ENCODE measurements at regions of chr3 and their contacts with region 1.

Region 1: DNA sequence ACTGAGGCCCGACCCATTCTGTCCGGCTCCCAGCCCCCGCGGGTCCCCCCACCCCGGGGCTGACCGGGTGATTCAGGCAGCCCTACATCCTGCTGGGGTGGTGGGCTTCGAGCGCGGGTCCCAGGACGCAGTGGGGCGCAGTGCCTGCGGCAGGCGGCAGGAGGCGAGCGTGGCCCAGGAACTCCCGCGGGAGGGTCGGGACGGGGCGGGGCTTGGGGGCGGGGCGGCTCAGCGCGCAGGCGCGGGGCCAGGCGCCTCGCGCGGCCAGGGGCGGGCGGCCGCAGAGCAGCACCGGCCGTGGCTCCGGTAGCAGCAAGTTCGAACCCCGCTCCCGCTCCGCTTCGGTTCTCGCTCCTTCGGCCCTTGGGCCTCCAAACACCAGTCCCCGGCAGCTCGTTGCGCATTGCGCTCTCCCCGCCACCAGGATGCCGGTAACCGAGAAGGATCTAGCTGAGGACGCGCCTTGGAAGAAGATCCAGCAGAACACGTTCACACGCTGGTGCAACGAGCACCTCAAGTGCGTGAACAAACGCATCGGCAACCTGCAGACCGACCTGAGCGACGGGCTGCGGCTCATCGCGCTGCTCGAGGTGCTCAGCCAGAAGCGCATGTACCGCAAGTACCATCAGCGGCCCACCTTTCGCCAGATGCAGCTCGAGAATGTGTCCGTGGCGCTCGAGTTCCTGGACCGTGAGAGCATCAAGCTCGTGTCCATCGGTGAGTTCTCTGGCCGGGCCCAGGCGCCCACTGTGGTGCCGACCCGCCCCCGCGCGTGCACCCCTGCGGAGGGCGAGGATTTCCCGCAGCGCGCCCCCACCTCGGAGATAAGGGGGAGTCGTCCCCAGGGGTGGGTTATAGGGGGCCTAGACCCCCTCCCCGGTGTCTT is at the start of gene FLNB:
- DNase-seq: peak; percentile 45
- ATAC-seq: peak; percentile 77
- H3K4me3 ChIP-seq: peak within 1 kb of the TSS; percentile 93 to 100 (median 99)
- H3K27ac ChIP-seq: peak within 1 kb of the TSS; percentile 74
- H3K4me1 ChIP-seq: peaks cover 55% of the 10 kb centered on the region
- H3K27me3 ChIP-seq: no peaks in the 10 kb centered on the region; a peak in 1 of 5 replicates
- CTCF ChIP-seq: peak; percentile 86
- EP300 ChIP-seq: no peak
- POLR2A ChIP-seq: peak; percentile 92 to 98
- RAD21 ChIP-seq: peak; percentile 83
- total RNA-seq, gene FLNB: 48.8 and 130 TPM in 2 replicates

Region 2: DNA sequence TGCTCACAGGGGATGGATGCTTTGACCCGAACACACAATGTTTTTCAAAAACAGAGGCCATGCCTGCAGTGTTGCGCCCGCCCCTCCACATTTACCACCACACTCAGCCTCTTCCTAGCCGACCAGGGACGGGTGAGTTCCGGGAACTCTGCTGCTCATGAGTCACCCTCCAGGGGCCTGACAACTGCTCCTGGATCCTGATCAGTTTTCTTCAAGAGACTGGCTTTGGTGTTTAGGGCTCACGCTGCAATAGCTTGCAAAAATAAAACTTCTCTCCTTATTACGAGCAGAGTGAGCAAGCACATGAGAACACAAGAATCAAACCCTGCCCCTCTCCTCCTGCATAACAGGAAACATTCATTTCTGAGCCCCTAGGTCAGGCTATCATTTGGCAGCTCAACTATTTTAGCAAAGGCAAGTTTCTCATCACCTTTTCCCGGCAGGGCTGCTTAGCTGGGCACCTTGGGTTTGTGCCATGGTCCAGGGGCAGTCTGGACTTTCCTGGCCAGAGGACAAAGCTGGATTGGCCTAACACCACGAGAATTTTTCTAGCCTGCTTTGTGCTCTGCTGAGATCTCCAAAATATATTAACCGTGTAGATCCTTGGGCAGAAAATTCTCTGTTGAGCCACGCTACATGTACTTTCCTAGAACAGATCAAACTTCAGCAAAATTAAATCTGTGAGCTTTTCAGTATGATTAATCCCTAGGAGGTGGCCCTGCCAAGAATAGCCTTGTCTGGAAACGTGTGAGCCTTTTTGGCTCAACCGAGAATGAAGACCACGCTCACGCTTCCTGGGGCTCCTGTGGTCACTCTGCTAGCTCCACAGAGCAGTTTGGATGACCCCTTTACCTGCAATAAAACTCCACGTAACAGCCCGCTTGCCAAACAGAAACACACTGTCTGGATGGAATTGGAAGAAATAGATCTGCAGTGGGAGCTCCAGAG is 1000.6 kb before region 1 on chr3:
- CTCF ChIA-PET with region 1: no interaction called
- POLR2A ChIA-PET with region 1: no interaction called
- in situ Hi-C with region 1: no loop called
- intact Hi-C with region 1: no loop called
- DNase-seq: no peak
- ATAC-seq: no peak
- H3K4me3 ChIP-seq: no peak overlapping the region
- H3K27ac ChIP-seq: no peak overlapping the region
- H3K4me1 ChIP-seq: no peaks in the 10 kb centered on the region
- H3K27me3 ChIP-seq: no peaks in the 10 kb centered on the region
- CTCF ChIP-seq: no peak
- EP300 ChIP-seq: no peak
- POLR2A ChIP-seq: no peak
- RAD21 ChIP-seq: no peak

Region 3: GRCh38 chr3:57961828-57962447 is 46.4 kb before region 1 on chr3:
- CTCF ChIA-PET with region 1: no interaction called
- POLR2A ChIA-PET with region 1: no interaction called
- in situ Hi-C with region 1: loop called (anchors 5 kb)
- intact Hi-C with region 1: loop called (anchors 5 kb)
- DNase-seq: peak; percentile 80
- ATAC-seq: peak; percentile 47
- H3K4me3 ChIP-seq: peak overlapping the region in 1 of 3 experiments; percentile 60; a peak in 2 of 6 replicates
- H3K27ac ChIP-seq: peak overlapping the region; percentile 74
- H3K4me1 ChIP-seq: peaks cover 59% of the 10 kb centered on the region
- H3K27me3 ChIP-seq: no peaks in the 10 kb centered on the region
- CTCF ChIP-seq: peak; percentile 70
- EP300 ChIP-seq: no peak
- POLR2A ChIP-seq: no peak
- RAD21 ChIP-seq: peak; percentile 78

Region 4: DNA sequence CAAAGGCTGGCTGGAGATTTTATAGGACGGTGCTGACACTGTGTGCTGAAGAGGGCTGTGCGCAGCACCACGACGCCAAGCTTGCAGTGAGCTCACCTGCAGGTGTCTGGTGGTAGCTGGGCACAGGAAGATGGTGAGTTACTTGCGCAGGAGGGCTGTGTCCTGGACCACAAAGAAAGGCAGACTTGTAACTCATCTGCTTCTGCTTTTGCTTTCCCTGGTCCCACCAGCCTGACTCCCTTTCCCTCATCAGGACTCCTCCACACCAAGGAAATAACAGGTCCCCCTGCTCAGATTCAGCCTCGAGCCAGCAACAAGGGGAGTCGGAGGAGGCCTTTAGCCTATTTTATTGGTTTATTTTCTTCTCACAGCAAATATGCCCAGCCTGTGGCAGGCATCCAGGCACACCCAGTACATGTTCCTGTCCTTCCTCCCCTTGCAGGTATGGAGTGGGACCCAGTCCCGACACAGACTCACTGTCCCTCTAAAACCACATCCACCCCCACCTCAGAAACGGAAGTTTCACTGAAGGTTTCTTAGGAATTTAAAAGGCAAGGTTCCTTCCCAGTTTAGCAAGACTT is 35.8 kb before region 1 on chr3:
- CTCF ChIA-PET with region 1: no interaction called
- POLR2A ChIA-PET with region 1: no interaction called
- in situ Hi-C with region 1: no loop called
- intact Hi-C with region 1: no loop called
- DNase-seq: no peak
- ATAC-seq: no peak
- H3K4me3 ChIP-seq: no peak overlapping the region
- H3K27ac ChIP-seq: no peak overlapping the region
- H3K4me1 ChIP-seq: peaks cover 88% of the 10 kb centered on the region
- H3K27me3 ChIP-seq: no peaks in the 10 kb centered on the region
- CTCF ChIP-seq: no peak
- EP300 ChIP-seq: no peak
- POLR2A ChIP-seq: no peak
- RAD21 ChIP-seq: no peak

Region 5: DNA sequence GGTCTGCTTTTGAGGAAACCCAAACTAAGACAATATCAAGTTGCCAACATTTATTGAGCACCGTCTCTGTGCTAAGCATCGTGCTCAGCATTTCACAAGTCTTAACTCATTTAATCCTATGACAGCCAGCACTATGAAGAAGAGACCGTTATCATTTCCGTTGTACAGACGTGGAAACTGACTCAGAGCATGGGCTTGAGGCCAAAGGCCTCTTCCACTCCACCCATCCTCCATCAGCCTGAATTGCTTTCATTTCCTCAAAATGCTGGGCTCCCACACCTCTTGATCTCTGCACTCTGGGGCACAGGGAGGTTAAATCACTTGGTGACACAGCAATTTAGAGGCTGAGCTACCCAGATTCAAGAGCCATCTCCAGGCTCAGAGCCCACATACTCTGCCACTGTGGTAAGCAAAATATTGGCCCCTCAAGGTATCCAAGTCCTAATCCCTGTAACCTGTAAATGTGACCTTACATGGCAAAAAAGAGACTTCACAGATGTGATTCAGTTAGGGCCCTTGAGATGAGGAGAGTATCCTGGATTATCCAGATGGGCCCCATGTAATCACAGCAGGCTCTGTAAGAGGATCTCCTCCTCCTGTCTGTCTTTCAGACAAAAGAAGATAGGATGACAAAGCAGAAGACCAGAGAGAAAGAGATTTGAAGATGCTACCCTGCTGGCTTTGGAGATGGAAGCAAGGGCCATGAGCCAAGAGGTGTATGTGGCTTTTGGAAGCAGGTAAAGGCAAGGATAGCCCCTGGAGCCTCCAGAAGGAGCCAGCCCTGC is 24.5 kb before region 1 on chr3:
- CTCF ChIA-PET with region 1: no interaction called
- POLR2A ChIA-PET with region 1: no interaction called
- in situ Hi-C with region 1: no loop called
- intact Hi-C with region 1: no loop called
- DNase-seq: peak; percentile 88
- ATAC-seq: peak; percentile 79
- H3K4me3 ChIP-seq: peak overlapping the region in 1 of 3 experiments; percentile 22; a peak in 2 of 6 replicates
- H3K27ac ChIP-seq: peak overlapping the region; percentile 46
- H3K4me1 ChIP-seq: peaks cover 69% of the 10 kb centered on the region
- H3K27me3 ChIP-seq: no peaks in the 10 kb centered on the region
- CTCF ChIP-seq: no peak
- EP300 ChIP-seq: peak in 1 of 2 experiments; percentile 77; a peak in 2 of 4 replicates
- POLR2A ChIP-seq: no peak
- RAD21 ChIP-seq: no peak

Region 6: GRCh38 chr3:58111513-58112186 is 103.3 kb after region 1 on chr3:
- CTCF ChIA-PET with region 1: no interaction called
- POLR2A ChIA-PET with region 1: no interaction called
- in situ Hi-C with region 1: loop called (anchors 5 kb)
- intact Hi-C with region 1: no loop called
- DNase-seq: peak; percentile 84
- ATAC-seq: peak; percentile 82
- H3K4me3 ChIP-seq: no peak overlapping the region
- H3K27ac ChIP-seq: peak overlapping the region; percentile 59
- H3K4me1 ChIP-seq: peaks cover 30% of the 10 kb centered on the region
- H3K27me3 ChIP-seq: no peaks in the 10 kb centered on the region
- CTCF ChIP-seq: no peak
- EP300 ChIP-seq: peak in 1 of 2 experiments; percentile 58; a peak in 1 of 4 replicates
- POLR2A ChIP-seq: no peak
- RAD21 ChIP-seq: no peak